CD8-positive, alpha-beta T cell (primary cell): ENCODE measurements at regions of chr10 and their contacts with region 1.

Region 1: GRCh38 chr10:6580279-6581029 is 378 bp upstream of the PRKCQ start:
- DNase-seq: peak; percentile 67 to 93 (median 86)
- ATAC-seq: peak; percentile 64
- H3K4me3 ChIP-seq: peak overlapping the region; percentile 78 to 89
- H3K4me3 Mint-ChIP-seq: peak overlapping the region; percentile 96
- H3K27ac ChIP-seq: peak overlapping the region; percentile 83 to 84
- H3K27ac Mint-ChIP-seq: peak overlapping the region; percentile 97
- H3K4me1 ChIP-seq: peaks cover 46% of the 10 kb centered on the region
- H3K4me1 Mint-ChIP-seq: peaks cover 68% of the 10 kb centered on the region
- H3K27me3 ChIP-seq: no peaks in the 10 kb centered on the region
- H3K27me3 Mint-ChIP-seq: no peaks in the 10 kb centered on the region
- CTCF ChIP-seq: peak; percentile 47

Region 2: DNA sequence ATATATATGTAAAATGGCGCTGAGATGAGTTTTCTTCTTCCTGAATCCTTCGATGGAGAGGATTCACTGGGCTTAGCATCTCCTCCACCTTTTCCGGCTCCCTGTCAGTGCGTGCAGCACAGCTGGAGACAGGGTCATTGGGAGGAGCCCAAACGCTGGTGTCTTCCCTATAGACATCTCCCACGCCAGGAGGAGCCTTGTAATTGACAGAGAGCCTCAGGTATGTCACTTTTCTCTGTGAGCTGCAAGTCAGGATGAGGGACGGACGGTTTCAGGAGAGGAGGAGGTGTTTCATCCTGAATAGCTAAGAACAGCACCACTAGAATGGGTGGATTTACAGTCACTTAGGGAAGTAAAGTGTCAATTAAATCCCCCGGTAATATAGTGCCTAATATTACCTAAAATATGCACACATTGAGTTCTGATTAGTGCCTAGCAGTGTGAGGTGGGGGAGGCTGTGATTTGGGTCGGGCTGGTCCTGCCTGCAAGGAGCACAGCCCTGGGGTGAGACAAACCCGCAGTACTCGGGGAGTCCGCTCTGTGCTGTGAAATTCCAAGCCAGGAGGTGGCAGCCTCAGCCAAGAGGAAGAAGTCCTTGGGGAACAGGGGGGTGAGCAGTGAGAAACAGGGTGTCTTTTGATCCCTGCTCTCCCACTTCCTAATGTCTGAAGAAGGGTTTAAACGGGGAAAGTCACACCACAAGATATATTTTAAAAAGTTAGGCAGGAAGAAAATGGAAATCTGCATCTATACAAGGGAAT is 631.3 kb before region 1 on chr10:
- CTCF ChIA-PET with region 1: no interaction called
- POLR2A ChIA-PET with region 1: no interaction called
- intact Hi-C with region 1: no loop called
- DNase-seq: peak in 3 of 9 experiments; percentile 26 to 36 (median 34)
- ATAC-seq: no peak
- H3K4me3 ChIP-seq: no peak overlapping the region
- H3K4me3 Mint-ChIP-seq: no peak overlapping the region
- H3K27ac ChIP-seq: no peak overlapping the region
- H3K27ac Mint-ChIP-seq: no peak overlapping the region
- H3K4me1 ChIP-seq: no peaks in the 10 kb centered on the region
- H3K4me1 Mint-ChIP-seq: peaks cover 5% of the 10 kb centered on the region
- H3K27me3 ChIP-seq: no peaks in the 10 kb centered on the region
- H3K27me3 Mint-ChIP-seq: no peaks in the 10 kb centered on the region
- CTCF ChIP-seq: no peak

Region 3: DNA sequence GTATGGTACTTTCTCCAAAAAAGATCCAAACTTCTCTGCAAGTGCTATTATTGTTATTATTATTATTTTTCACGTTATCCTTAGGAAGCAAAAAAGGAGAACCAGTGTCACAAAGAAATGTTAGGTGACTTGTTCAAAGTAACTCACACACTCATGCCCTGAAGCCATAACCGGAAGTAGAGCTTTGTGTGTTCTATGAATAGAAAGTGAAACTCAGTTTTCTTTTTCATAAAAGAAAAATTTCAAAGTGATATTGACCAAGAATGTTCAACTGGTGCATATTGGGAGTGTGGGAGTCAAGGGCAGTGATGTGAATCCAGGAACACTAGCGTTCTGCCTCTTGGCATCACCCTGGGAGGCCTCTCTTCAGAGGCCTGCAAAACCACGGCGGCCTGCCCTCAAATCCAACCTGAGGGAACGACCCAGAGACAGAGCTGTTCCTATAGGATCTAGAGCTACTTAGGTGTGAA is 106.5 kb before region 1 on chr10:
- CTCF ChIA-PET with region 1: interaction called, 8 read pairs
- POLR2A ChIA-PET with region 1: interaction called, 9 read pairs
- intact Hi-C with region 1: loop called (anchors 2 to 5 kb)
- DNase-seq: peak in 5 of 9 experiments; percentile 15 to 86 (median 46)
- ATAC-seq: peak; percentile 77
- H3K4me3 ChIP-seq: peak overlapping the region; percentile 42 to 46
- H3K4me3 Mint-ChIP-seq: peak overlapping the region; percentile 90
- H3K27ac ChIP-seq: peak overlapping the region; percentile 63 to 95
- H3K27ac Mint-ChIP-seq: peak overlapping the region; percentile 99
- H3K4me1 ChIP-seq: peaks cover 24% of the 10 kb centered on the region
- H3K4me1 Mint-ChIP-seq: peaks cover 59% of the 10 kb centered on the region
- H3K27me3 ChIP-seq: no peaks in the 10 kb centered on the region
- H3K27me3 Mint-ChIP-seq: no peaks in the 10 kb centered on the region
- CTCF ChIP-seq: no peak

Region 4: GRCh38 chr10:6530211-6530840 is 50.1 kb before region 1 on chr10:
- CTCF ChIA-PET with region 1: interaction called, 9 read pairs
- POLR2A ChIA-PET with region 1: interaction called, 9 read pairs
- intact Hi-C with region 1: loop called (anchors 1 kb)
- DNase-seq: peak; percentile 49 to 89 (median 77)
- ATAC-seq: peak; percentile 96
- H3K4me3 ChIP-seq: peak overlapping the region; percentile 38 to 42
- H3K4me3 Mint-ChIP-seq: peak overlapping the region; percentile 83
- H3K27ac ChIP-seq: peak overlapping the region; percentile 84 to 89
- H3K27ac Mint-ChIP-seq: peak overlapping the region; percentile 97
- H3K4me1 ChIP-seq: peaks cover 57% of the 10 kb centered on the region
- H3K4me1 Mint-ChIP-seq: peaks cover 85% of the 10 kb centered on the region
- H3K27me3 ChIP-seq: no peaks in the 10 kb centered on the region
- H3K27me3 Mint-ChIP-seq: no peaks in the 10 kb centered on the region
- CTCF ChIP-seq: no peak

Region 5: GRCh38 chr10:6593241-6593671 is 12.8 kb after region 1 on chr10:
- CTCF ChIA-PET with region 1: interaction called, 179 read pairs
- POLR2A ChIA-PET with region 1: interaction called, 43 read pairs
- intact Hi-C with region 1: loop called (anchors 1 kb)
- DNase-seq: peak in 2 of 9 experiments; percentile 29 to 53
- ATAC-seq: peak; percentile 45
- H3K4me3 ChIP-seq: no peak overlapping the region
- H3K4me3 Mint-ChIP-seq: peak overlapping the region; percentile 32
- H3K27ac ChIP-seq: peak overlapping the region; percentile 62 to 86
- H3K27ac Mint-ChIP-seq: peak overlapping the region; percentile 94
- H3K4me1 ChIP-seq: peaks cover 97% of the 10 kb centered on the region
- H3K4me1 Mint-ChIP-seq: peaks cover 96% of the 10 kb centered on the region
- H3K27me3 ChIP-seq: no peaks in the 10 kb centered on the region
- H3K27me3 Mint-ChIP-seq: no peaks in the 10 kb centered on the region
- CTCF ChIP-seq: no peak

Region 6: GRCh38 chr10:6647811-6648526 is 67.5 kb after region 1 on chr10:
- CTCF ChIA-PET with region 1: interaction called, 9 read pairs
- POLR2A ChIA-PET with region 1: interaction called, 4 read pairs
- intact Hi-C with region 1: loop called (anchors 1 kb)
- DNase-seq: peak; percentile 43 to 84 (median 74)
- ATAC-seq: peak; percentile 99
- H3K4me3 ChIP-seq: no peak overlapping the region
- H3K4me3 Mint-ChIP-seq: no peak overlapping the region
- H3K27ac ChIP-seq: no peak overlapping the region
- H3K27ac Mint-ChIP-seq: no peak overlapping the region
- H3K4me1 ChIP-seq: peaks cover 15% of the 10 kb centered on the region
- H3K4me1 Mint-ChIP-seq: peaks cover 22% of the 10 kb centered on the region
- H3K27me3 ChIP-seq: no peaks in the 10 kb centered on the region
- H3K27me3 Mint-ChIP-seq: no peaks in the 10 kb centered on the region
- CTCF ChIP-seq: peak; percentile 90

Region 7: DNA sequence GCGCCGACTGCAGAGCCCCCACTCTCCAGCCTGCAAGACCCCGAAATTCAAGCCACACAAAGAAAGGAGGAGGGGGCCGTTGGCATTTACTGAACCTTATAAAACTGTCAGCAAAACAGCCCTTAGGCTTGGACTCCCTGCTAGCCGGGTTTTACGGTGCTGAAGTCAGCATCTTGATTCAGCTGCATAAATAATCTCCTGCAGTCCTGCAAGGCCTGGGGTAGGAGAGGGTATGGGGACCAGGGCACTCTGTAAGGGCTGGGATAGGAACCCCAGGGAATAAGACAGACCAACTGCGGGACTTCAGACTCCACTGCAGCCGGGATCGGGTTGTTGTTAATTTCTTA is 158.0 kb after region 1 on chr10:
- CTCF ChIA-PET with region 1: no interaction called
- POLR2A ChIA-PET with region 1: no interaction called
- intact Hi-C with region 1: no loop called
- DNase-seq: no peak
- ATAC-seq: no peak
- H3K4me3 ChIP-seq: no peak overlapping the region
- H3K4me3 Mint-ChIP-seq: no peak overlapping the region
- H3K27ac ChIP-seq: no peak overlapping the region
- H3K27ac Mint-ChIP-seq: no peak overlapping the region
- H3K4me1 ChIP-seq: no peaks in the 10 kb centered on the region
- H3K4me1 Mint-ChIP-seq: peaks cover 2% of the 10 kb centered on the region
- H3K27me3 ChIP-seq: no peaks in the 10 kb centered on the region
- H3K27me3 Mint-ChIP-seq: peaks cover 24% of the 10 kb centered on the region
- CTCF ChIP-seq: no peak

Region 8: GRCh38 chr10:7410862-7411670 is 830.6 kb after region 1 on chr10 and contains the start of gene SFMBT2:
- CTCF ChIA-PET with region 1: no interaction called
- POLR2A ChIA-PET with region 1: no interaction called
- intact Hi-C with region 1: loop called in 1 of 2 experiments (anchors 10 kb)
- DNase-seq: peak in 7 of 9 experiments; percentile 48 to 87 (median 67)
- ATAC-seq: peak; percentile 51
- H3K4me3 ChIP-seq: peak within 1 kb of the TSS; percentile 93 to 96
- H3K4me3 Mint-ChIP-seq: peak within 1 kb of the TSS; percentile 98
- H3K27ac ChIP-seq: peak within 1 kb of the TSS; percentile 52 to 81
- H3K27ac Mint-ChIP-seq: peak within 1 kb of the TSS; percentile 96
- H3K4me1 ChIP-seq: peaks cover 40% of the 10 kb centered on the region
- H3K4me1 Mint-ChIP-seq: peaks cover 44% of the 10 kb centered on the region
- H3K27me3 ChIP-seq: peaks cover 0 to 10% of the 10 kb centered on the region in 2 experiments
- H3K27me3 Mint-ChIP-seq: no peaks in the 10 kb centered on the region
- CTCF ChIP-seq: no peak
- total RNA-seq, gene SFMBT2: 27.5 to 30.3 TPM